ENCODE measurements at regions of chr11 and their contacts with region 1.

Region 1: DNA sequence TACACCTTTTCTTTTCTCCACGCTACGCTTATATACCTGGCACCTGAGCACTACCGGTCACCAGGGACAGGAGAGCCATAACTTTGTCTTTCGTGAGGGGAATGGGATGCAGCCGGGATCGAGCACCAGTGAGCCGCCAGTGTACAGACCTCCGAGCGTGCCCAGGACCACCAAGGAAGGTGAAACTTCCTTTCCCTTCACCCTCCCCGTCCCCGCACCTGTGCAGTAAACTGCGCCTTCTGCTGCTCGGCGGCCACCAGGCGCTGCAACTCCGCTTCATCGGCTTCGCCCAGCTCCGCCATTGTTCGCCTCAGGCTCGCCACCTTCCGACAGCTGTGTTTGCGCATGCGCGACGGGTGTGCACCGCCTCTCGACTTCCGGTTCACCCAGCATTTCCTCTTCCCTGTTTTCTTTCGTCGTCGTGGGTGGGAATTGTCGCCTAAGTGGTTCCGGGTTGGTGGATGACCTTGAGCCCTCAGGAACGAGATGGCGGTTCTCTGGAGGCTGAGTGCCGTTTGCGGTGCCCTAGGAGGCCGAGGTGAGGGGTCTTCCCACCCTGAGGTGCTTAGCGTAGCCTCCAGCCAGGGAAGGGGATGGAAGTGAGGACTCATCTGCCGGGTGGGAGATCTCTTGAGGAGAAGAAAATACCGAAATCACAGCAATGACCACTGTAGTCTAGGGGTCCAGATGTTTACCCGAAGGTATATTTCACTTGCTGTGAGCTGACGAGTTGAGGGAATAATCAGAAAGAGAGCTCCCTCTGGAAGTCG is at the starts of genes SDHD and TIMM8B:
- DNase-seq: peak; percentile 92 to 99 (median 95)
- ATAC-seq: peak; percentile 93
- H3K4me3 ChIP-seq: peak within 1 kb of the TSS; percentile 87 to 92
- H3K4me3 Mint-ChIP-seq: peak within 1 kb of the TSS; percentile 100
- H3K27ac ChIP-seq: peak within 1 kb of the TSS; percentile 81 to 82
- H3K27ac Mint-ChIP-seq: peak within 1 kb of the TSS; percentile 99
- H3K4me1 ChIP-seq: peaks cover 33% of the 10 kb centered on the region
- H3K4me1 Mint-ChIP-seq: peaks cover 56% of the 10 kb centered on the region
- H3K27me3 ChIP-seq: no peaks in the 10 kb centered on the region
- H3K27me3 Mint-ChIP-seq: no peaks in the 10 kb centered on the region
- CTCF ChIP-seq: no peak
- total RNA-seq, gene SDHD: 31.2 to 32.3 TPM
- total RNA-seq, gene TIMM8B: 10.5 to 10.7 TPM

Region 2: GRCh38 chr11:111429066-111429506 is 657.5 kb before region 1 on chr11:
- CTCF ChIA-PET with region 1: no interaction called
- POLR2A ChIA-PET with region 1: no interaction called
- intact Hi-C with region 1: no loop called
- DNase-seq: peak in 5 of 9 experiments; percentile 29 to 56 (median 43)
- ATAC-seq: peak; percentile 42
- H3K4me3 ChIP-seq: no peak overlapping the region
- H3K4me3 Mint-ChIP-seq: no peak overlapping the region
- H3K27ac ChIP-seq: no peak overlapping the region
- H3K27ac Mint-ChIP-seq: no peak overlapping the region
- H3K4me1 ChIP-seq: no peaks in the 10 kb centered on the region
- H3K4me1 Mint-ChIP-seq: no peaks in the 10 kb centered on the region
- H3K27me3 ChIP-seq: no peaks in the 10 kb centered on the region
- H3K27me3 Mint-ChIP-seq: peaks cover 1% of the 10 kb centered on the region
- CTCF ChIP-seq: peak; percentile 40

Region 3: DNA sequence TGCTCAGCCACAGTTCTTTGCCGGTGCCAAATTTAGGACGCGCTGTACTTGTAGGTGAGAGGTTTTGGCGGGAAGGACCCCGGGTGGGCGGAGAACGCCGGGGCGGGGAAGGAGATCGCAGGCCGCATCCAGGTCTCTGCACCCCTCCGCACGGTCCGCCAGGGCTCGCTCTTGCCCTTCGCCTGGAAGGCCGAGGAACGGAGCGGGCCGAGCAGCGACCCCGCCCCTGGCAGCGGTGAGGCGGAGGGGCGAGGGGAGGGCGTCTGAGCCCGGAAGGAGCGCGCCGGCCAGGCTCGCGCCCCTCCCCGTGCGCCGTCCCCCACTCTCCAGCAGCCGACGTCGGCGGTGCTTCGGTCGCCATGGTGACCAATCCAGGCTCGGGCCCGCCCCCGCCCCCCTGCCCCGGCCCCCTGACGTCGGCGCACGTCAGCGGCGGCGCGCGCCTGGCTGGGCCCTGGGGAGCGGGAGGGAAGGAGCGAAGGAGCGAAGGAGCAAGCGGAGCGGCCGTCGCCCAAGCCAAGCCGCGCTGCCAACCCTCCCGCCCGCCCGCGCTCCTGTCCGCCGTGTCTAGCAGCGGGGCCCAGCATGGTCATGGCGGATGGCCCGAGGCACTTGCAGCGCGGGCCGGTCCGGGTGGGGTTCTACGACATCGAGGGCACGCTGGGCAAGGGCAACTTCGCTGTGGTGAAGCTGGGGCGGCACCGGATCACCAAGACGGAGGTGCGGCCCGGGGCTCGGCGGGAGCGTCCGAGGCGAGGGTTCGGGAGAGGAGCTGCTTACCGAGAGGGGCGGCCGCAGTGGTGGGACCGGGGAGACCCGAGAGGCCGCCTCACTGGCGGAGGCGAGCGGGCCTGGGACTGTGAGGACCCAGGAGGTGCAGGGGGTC is 484.4 kb before region 1 on chr11 and contains the start of gene SIK2:
- CTCF ChIA-PET with region 1: no interaction called
- POLR2A ChIA-PET with region 1: no interaction called
- intact Hi-C with region 1: loop called (anchors 1 to 5 kb)
- DNase-seq: peak; percentile 78 to 96 (median 90)
- ATAC-seq: peak; percentile 83
- H3K4me3 ChIP-seq: peak within 1 kb of the TSS; percentile 70 to 95
- H3K4me3 Mint-ChIP-seq: peak within 1 kb of the TSS; percentile 94
- H3K27ac ChIP-seq: peak within 1 kb of the TSS; percentile 77 to 94
- H3K27ac Mint-ChIP-seq: peak within 1 kb of the TSS; percentile 94
- H3K4me1 ChIP-seq: peaks cover 24% of the 10 kb centered on the region
- H3K4me1 Mint-ChIP-seq: peaks cover 27% of the 10 kb centered on the region
- H3K27me3 ChIP-seq: no peaks in the 10 kb centered on the region
- H3K27me3 Mint-ChIP-seq: no peaks in the 10 kb centered on the region
- CTCF ChIP-seq: peak; percentile 57
- total RNA-seq, gene SIK2: 2.9 to 3.2 TPM

Region 4: DNA sequence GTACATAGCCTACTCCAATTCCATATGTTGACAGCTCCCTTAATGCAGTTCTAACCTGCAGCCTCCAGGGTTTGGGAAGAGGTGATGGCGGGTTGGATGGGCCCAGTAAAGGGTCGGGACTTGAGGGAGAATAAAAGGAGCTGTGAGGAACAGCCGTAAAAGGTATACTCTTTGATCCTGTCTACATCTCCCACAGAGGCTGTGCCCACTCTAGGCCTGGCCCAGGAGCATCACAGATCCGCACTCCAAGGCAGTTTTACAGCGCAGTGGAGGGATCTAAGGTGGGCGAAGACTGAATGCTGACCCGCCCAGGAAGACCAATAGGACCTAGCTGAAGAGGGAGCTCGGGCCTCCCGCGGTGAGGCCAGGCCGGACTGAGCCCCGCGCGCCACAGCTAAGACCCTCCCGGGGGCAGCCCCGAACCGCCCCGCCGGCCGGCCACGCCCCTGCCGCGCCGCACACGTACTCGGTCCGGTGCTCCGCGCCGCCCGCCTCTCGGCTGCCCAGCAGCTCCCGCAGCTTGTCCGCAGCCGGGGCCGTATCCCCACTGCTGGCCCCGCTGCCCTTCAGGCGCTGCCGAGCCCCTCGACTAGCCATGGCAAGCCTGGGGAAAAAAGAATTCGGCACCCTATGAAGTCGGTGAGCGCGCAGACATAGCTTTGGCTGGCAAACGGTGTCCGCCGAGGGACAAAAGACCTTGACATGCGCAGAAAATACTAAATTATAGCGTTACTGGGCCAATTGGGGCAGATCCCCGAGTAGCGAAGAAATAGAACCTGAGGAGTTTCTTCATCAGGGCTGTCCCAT is 215.5 kb before region 1 on chr11 and contains the start of gene ALG9:
- CTCF ChIA-PET with region 1: interaction called, 4 read pairs
- POLR2A ChIA-PET with region 1: no interaction called
- intact Hi-C with region 1: loop called in 1 of 2 experiments (anchors 1 kb)
- DNase-seq: peak; percentile 80 to 93 (median 89)
- ATAC-seq: peak; percentile 87
- H3K4me3 ChIP-seq: peak within 1 kb of the TSS; percentile 51 to 70
- H3K4me3 Mint-ChIP-seq: peak within 1 kb of the TSS; percentile 93
- H3K27ac ChIP-seq: peak within 1 kb of the TSS; percentile 76 to 77
- H3K27ac Mint-ChIP-seq: peak within 1 kb of the TSS; percentile 97
- H3K4me1 ChIP-seq: peaks cover 18% of the 10 kb centered on the region
- H3K4me1 Mint-ChIP-seq: peaks cover 34% of the 10 kb centered on the region
- H3K27me3 ChIP-seq: no peaks in the 10 kb centered on the region
- H3K27me3 Mint-ChIP-seq: no peaks in the 10 kb centered on the region
- CTCF ChIP-seq: peak; percentile 18
- total RNA-seq, gene ALG9: 35.5 to 36.9 TPM

Region 5: DNA sequence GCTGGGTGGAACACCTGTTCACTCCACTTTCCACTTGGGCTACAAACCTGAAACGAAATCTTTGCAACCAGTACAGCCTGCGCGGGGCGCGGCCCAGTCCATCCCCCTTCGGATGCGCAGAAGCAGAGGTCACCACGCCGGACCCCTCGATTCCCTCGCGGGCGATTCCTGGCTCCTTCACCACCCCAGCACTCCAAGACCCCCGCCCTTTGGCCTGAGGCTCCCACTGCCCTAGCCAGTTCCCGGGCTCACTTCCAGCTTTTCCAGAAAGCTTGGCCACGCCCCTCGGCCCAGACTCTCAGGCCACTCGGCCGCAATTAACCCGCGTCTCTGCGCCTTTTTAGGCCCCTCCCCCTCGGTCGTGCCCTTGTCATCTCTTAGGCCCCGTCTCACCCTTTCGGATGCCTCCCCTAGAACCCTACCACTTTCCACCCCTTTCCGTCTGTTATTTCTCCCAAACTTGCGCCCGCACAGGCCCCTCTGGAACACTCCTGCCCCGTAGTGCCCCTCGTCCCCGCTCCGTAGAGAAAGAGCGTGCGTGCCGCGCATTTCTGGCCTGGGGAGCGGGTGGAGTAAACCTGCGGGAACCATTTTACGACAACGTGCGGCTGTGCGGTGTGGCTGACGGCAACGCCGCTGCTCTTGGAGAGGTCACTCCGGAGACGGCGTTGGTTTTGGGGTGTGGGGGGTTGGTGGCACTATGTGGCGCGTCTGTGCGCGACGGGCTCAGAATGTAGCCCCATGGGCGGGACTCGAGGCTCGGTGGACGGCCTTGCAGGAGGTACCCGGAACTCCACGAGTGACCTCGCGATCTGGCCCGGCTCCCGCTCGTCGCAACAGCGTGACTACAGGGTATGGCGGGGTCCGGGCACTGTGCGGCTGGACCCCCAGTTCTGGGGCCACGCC is 61.6 kb before region 1 on chr11 and contains the start of gene DLAT:
- CTCF ChIA-PET with region 1: interaction called, 3 read pairs
- POLR2A ChIA-PET with region 1: interaction called, 3 read pairs
- intact Hi-C with region 1: loop called (anchors 1 to 2 kb)
- DNase-seq: peak; percentile 61 to 90 (median 84)
- ATAC-seq: peak; percentile 89
- H3K4me3 ChIP-seq: peak within 1 kb of the TSS; percentile 87 to 95
- H3K4me3 Mint-ChIP-seq: peak within 1 kb of the TSS; percentile 100
- H3K27ac ChIP-seq: peak within 1 kb of the TSS; percentile 68 to 78
- H3K27ac Mint-ChIP-seq: peak within 1 kb of the TSS; percentile 98
- H3K4me1 ChIP-seq: peaks cover 21% of the 10 kb centered on the region
- H3K4me1 Mint-ChIP-seq: peaks cover 27% of the 10 kb centered on the region
- H3K27me3 ChIP-seq: no peaks in the 10 kb centered on the region
- H3K27me3 Mint-ChIP-seq: no peaks in the 10 kb centered on the region
- CTCF ChIP-seq: no peak
- total RNA-seq, gene DLAT: 14.5 to 14.7 TPM

Region 6: GRCh38 chr11:112226062-112226830 is 139.6 kb after region 1 on chr11 and contains the start of gene PTS:
- CTCF ChIA-PET with region 1: no interaction called
- POLR2A ChIA-PET with region 1: no interaction called
- intact Hi-C with region 1: loop called (anchors 1 to 2 kb)
- DNase-seq: peak; percentile 66 to 94 (median 82)
- ATAC-seq: peak; percentile 89
- H3K4me3 ChIP-seq: peak within 1 kb of the TSS; percentile 71 to 81
- H3K4me3 Mint-ChIP-seq: peak within 1 kb of the TSS; percentile 95
- H3K27ac ChIP-seq: peak within 1 kb of the TSS; percentile 91 to 100
- H3K27ac Mint-ChIP-seq: peak within 1 kb of the TSS; percentile 99
- H3K4me1 ChIP-seq: peaks cover 10% of the 10 kb centered on the region
- H3K4me1 Mint-ChIP-seq: peaks cover 31% of the 10 kb centered on the region
- H3K27me3 ChIP-seq: no peaks in the 10 kb centered on the region
- H3K27me3 Mint-ChIP-seq: no peaks in the 10 kb centered on the region
- CTCF ChIP-seq: no peak
- total RNA-seq, gene PTS: 83.5 to 87.9 TPM

Region 7: GRCh38 chr11:113314389-113315301 is 1228.0 kb after region 1 on chr11 and contains the start of gene TTC12:
- CTCF ChIA-PET with region 1: no interaction called
- POLR2A ChIA-PET with region 1: no interaction called
- intact Hi-C with region 1: loop called in 1 of 2 experiments (anchors 10 kb)
- DNase-seq: peak; percentile 82 to 95 (median 90)
- ATAC-seq: peak; percentile 98
- H3K4me3 ChIP-seq: peak within 1 kb of the TSS; percentile 59 to 66
- H3K4me3 Mint-ChIP-seq: peak within 1 kb of the TSS; percentile 82
- H3K27ac ChIP-seq: peak within 1 kb of the TSS; percentile 81 to 87
- H3K27ac Mint-ChIP-seq: peak within 1 kb of the TSS; percentile 85
- H3K4me1 ChIP-seq: peaks cover 17% of the 10 kb centered on the region
- H3K4me1 Mint-ChIP-seq: peaks cover 30% of the 10 kb centered on the region
- H3K27me3 ChIP-seq: no peaks in the 10 kb centered on the region
- H3K27me3 Mint-ChIP-seq: no peaks in the 10 kb centered on the region
- CTCF ChIP-seq: no peak
- total RNA-seq, gene TTC12: 8.6 to 10.8 TPM

Region 8: GRCh38 chr11:113875234-113876073 is 1788.8 kb after region 1 on chr11 and contains the start of gene USP28:
- CTCF ChIA-PET with region 1: no interaction called
- POLR2A ChIA-PET with region 1: no interaction called
- intact Hi-C with region 1: loop called in 1 of 2 experiments (anchors 10 kb)
- DNase-seq: peak; percentile 45 to 90 (median 76)
- ATAC-seq: peak; percentile 85
- H3K4me3 ChIP-seq: peak within 1 kb of the TSS; percentile 80 to 95
- H3K4me3 Mint-ChIP-seq: peak within 1 kb of the TSS; percentile 96
- H3K27ac ChIP-seq: peak within 1 kb of the TSS; percentile 52 to 88
- H3K27ac Mint-ChIP-seq: peak within 1 kb of the TSS; percentile 97
- H3K4me1 ChIP-seq: peaks cover 11% of the 10 kb centered on the region
- H3K4me1 Mint-ChIP-seq: peaks cover 48% of the 10 kb centered on the region
- H3K27me3 ChIP-seq: no peaks in the 10 kb centered on the region
- H3K27me3 Mint-ChIP-seq: no peaks in the 10 kb centered on the region
- CTCF ChIP-seq: no peak
- total RNA-seq, gene USP28: 6.4 to 6.8 TPM

Measured in CD8-positive, alpha-beta T cell (primary cell).